GM12878 (cell line): ENCODE measurements at regions of chr5 and their contacts with region 1.

Region 1: GRCh38 chr5:97142521-97143254 is at the start of gene LIX1:
- DNase-seq: no peak
- ATAC-seq: peak; percentile 97
- H3K4me3 ChIP-seq: no peak within 1 kb of the TSS
- H3K27ac ChIP-seq: no peak within 1 kb of the TSS
- H3K4me1 ChIP-seq: no peaks in the 10 kb centered on the region
- H3K27me3 ChIP-seq: no peaks in the 10 kb centered on the region
- CTCF ChIP-seq: peak; percentile 60 to 84 (median 70); a peak in 5 of 6 replicates
- EP300 ChIP-seq: no peak
- POLR2A ChIP-seq: no peak
- RAD21 ChIP-seq: peak; percentile 91
- polyA plus RNA-seq, gene LIX1: 0.02 TPM

Region 2: DNA sequence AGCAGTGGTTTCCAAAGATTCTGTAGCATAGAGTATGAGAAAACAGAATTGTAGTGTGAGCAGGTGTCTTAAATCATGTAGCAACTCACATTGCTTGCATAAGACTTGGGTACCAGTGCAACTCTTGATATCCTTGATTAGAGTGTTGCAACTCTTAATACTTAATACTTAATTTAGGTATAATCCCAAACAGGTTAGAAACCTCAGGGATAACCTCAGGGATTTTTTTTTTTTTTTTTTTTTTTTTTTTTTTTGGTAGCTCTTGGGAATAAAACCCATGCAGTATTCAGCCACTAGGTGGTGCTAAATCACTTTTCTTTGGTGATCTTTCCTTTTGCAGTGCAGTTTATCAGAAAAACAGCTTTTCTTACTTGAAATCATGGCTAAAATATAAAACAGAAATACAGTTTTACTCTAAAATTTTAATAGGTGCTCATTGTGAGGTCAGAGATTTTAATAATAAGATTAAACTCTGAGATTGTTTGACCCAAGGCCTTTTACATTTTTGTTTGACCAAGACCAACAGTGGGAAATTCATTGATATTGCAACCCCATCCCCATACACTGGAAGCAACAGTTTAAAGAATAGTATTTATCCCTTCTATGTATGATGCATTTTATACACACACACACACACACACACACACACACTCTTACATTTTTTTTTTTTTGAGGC is 390.2 kb before region 1 on chr5:
- CTCF ChIA-PET with region 1: interaction called, 37 read pairs
- POLR2A ChIA-PET with region 1: no interaction called
- RAD21 ChIA-PET with region 1: interaction called, 61 read pairs
- SMC1A ChIA-PET with region 1: interaction called, 13 read pairs
- in situ Hi-C with region 1: no loop called
- intact Hi-C with region 1: no loop called
- DNase-seq: no peak
- ATAC-seq: peak; percentile 63
- H3K4me3 ChIP-seq: no peak overlapping the region
- H3K27ac ChIP-seq: no peak overlapping the region
- H3K4me1 ChIP-seq: no peaks in the 10 kb centered on the region
- H3K27me3 ChIP-seq: no peaks in the 10 kb centered on the region
- CTCF ChIP-seq: peak; percentile 54 to 61 (median 58); a peak in 5 of 6 replicates
- EP300 ChIP-seq: no peak
- POLR2A ChIP-seq: no peak
- RAD21 ChIP-seq: peak; percentile 65

Region 3: GRCh38 chr5:96978812-96979449 is 163.8 kb before region 1 on chr5:
- CTCF ChIA-PET with region 1: interaction called, 14 read pairs
- POLR2A ChIA-PET with region 1: no interaction called
- RAD21 ChIA-PET with region 1: no interaction called
- SMC1A ChIA-PET with region 1: interaction called, 3 read pairs
- in situ Hi-C with region 1: no loop called
- intact Hi-C with region 1: no loop called
- DNase-seq: no peak
- ATAC-seq: no peak
- H3K4me3 ChIP-seq: no peak overlapping the region
- H3K27ac ChIP-seq: no peak overlapping the region
- H3K4me1 ChIP-seq: no peaks in the 10 kb centered on the region
- H3K27me3 ChIP-seq: no peaks in the 10 kb centered on the region
- CTCF ChIP-seq: no peak
- EP300 ChIP-seq: no peak
- POLR2A ChIP-seq: no peak
- RAD21 ChIP-seq: no peak

Region 4: DNA sequence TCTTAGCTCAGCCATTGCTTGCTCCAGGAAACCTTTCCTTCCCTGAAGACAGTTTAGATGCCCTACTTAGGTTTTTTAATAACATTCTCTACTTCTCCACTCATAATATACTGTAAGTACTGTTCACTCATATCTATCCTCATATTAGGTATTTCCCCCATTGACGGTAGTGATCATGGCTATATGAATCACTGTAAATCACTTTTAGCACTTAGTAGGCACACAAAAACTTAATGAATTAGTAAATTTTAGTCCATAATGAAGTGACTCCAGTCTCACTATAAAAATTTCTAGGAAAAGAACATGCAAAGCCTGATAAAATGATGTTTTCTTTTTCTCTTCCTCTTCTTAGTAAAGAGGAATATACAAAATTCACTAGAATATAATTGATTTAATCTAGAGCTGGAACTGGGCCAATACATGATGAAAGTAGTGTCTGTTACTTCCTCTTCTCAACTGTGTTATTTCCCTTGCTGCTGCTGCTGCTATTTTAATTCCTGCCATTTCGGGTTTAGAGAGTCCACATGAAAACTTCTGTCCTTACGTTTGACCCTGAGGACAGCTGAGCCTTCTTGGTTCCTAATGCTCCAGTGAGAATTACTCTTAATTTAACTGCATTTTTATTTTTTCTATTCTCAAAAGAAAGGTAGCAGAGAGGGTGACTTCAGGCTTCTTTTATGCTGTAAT is 133.3 kb before region 1 on chr5:
- CTCF ChIA-PET with region 1: interaction called, 17 read pairs
- POLR2A ChIA-PET with region 1: no interaction called
- RAD21 ChIA-PET with region 1: no interaction called
- SMC1A ChIA-PET with region 1: interaction called, 5 read pairs
- in situ Hi-C with region 1: no loop called
- intact Hi-C with region 1: no loop called
- DNase-seq: peak; percentile 19
- ATAC-seq: peak; percentile 86
- H3K4me3 ChIP-seq: no peak overlapping the region
- H3K27ac ChIP-seq: peak overlapping the region; percentile 8; the same call in 1 of the 2 replicates
- H3K4me1 ChIP-seq: peaks cover 11% of the 10 kb centered on the region; the same call in 1 of the 2 replicates
- H3K27me3 ChIP-seq: no peaks in the 10 kb centered on the region
- CTCF ChIP-seq: no peak
- EP300 ChIP-seq: no peak
- POLR2A ChIP-seq: no peak
- RAD21 ChIP-seq: no peak

Region 5: GRCh38 chr5:97167435-97167834 is 24.7 kb after region 1 on chr5:
- CTCF ChIA-PET with region 1: interaction called, 121 read pairs
- POLR2A ChIA-PET with region 1: no interaction called
- RAD21 ChIA-PET with region 1: interaction called, 4 read pairs
- SMC1A ChIA-PET with region 1: interaction called, 10 read pairs
- in situ Hi-C with region 1: no loop called
- intact Hi-C with region 1: no loop called
- DNase-seq: peak; percentile 51
- ATAC-seq: peak; percentile 89
- H3K4me3 ChIP-seq: peak overlapping the region; percentile 9; the same call in 1 of the 2 replicates
- H3K27ac ChIP-seq: peak overlapping the region; percentile 58
- H3K4me1 ChIP-seq: peaks cover 6% of the 10 kb centered on the region; the same call in 1 of the 2 replicates
- H3K27me3 ChIP-seq: no peaks in the 10 kb centered on the region
- CTCF ChIP-seq: no peak
- EP300 ChIP-seq: no peak
- POLR2A ChIP-seq: no peak
- RAD21 ChIP-seq: no peak

Region 6: DNA sequence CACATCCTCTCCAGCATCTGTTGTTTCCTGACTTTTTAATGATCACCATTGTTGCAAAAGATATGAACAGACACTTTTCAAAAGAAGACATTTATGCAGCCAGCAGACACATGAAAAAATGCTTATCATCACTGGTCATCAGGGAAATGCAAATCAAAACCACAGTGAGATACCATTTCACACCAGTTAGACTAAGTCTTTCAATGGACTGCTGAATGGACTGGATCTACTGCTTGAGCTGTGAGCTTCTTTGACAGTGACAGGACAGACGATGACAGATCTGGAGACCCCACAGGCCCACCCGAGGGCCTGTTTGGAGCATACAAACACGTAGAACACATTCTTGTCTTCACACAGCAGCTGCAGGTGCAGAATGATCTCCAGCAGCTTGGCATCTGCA is 306.5 kb after region 1 on chr5:
- CTCF ChIA-PET with region 1: no interaction called
- POLR2A ChIA-PET with region 1: no interaction called
- RAD21 ChIA-PET with region 1: no interaction called
- SMC1A ChIA-PET with region 1: no interaction called
- in situ Hi-C with region 1: no loop called
- intact Hi-C with region 1: no loop called
- DNase-seq: no peak
- ATAC-seq: peak; percentile 36; the same call in 1 of the 3 replicates
- H3K4me3 ChIP-seq: no peak overlapping the region
- H3K27ac ChIP-seq: no peak overlapping the region
- H3K4me1 ChIP-seq: no peaks in the 10 kb centered on the region
- H3K27me3 ChIP-seq: no peaks in the 10 kb centered on the region
- CTCF ChIP-seq: no peak
- EP300 ChIP-seq: no peak
- POLR2A ChIP-seq: no peak
- RAD21 ChIP-seq: no peak